ENCODE measurements at regions of chr3 and their contacts with region 1.

Region 1: GRCh38 chr3:196554205-196554604 is 14.1 kb downstream of the WDR53 start:
- DNase-seq: no peak
- CTCF ChIP-seq: no peak

Region 2: DNA sequence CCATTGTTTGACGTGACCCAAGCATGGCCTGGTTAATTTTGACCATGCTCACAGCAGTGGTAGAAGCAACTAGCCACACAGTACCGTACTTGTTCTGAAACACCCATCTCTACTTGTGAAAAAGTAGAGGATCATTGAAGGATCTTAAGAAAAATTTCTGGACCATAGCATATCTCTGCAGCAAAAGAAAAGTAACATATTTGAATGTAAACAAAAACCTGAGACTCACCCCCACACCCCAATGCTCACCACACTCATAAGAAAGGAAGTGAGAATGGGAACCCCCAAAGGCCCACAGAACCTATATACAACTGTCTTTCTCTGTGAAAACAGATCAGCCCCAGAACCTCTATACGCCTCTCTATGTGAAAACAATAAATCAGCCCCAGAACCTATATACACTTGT is 438.5 kb before region 1 on chr3:
- CTCF ChIA-PET with region 1: no interaction called
- POLR2A ChIA-PET with region 1: no interaction called
- DNase-seq: peak; percentile 72
- CTCF ChIP-seq: no peak

Region 3: GRCh38 chr3:196499061-196499460 is 55.1 kb before region 1 on chr3:
- CTCF ChIA-PET with region 1: no interaction called
- POLR2A ChIA-PET with region 1: no interaction called
- DNase-seq: no peak
- CTCF ChIP-seq: no peak

Region 4: GRCh38 chr3:196517919-196518318 is 36.3 kb before region 1 on chr3:
- CTCF ChIA-PET with region 1: no interaction called
- POLR2A ChIA-PET with region 1: no interaction called
- DNase-seq: no peak
- CTCF ChIP-seq: no peak

Region 5: GRCh38 chr3:196537319-196537984 is 16.8 kb before region 1 on chr3:
- CTCF ChIA-PET with region 1: interaction called, 14 read pairs
- POLR2A ChIA-PET with region 1: no interaction called
- DNase-seq: peak; percentile 39
- CTCF ChIP-seq: peak; percentile 64

Region 6: DNA sequence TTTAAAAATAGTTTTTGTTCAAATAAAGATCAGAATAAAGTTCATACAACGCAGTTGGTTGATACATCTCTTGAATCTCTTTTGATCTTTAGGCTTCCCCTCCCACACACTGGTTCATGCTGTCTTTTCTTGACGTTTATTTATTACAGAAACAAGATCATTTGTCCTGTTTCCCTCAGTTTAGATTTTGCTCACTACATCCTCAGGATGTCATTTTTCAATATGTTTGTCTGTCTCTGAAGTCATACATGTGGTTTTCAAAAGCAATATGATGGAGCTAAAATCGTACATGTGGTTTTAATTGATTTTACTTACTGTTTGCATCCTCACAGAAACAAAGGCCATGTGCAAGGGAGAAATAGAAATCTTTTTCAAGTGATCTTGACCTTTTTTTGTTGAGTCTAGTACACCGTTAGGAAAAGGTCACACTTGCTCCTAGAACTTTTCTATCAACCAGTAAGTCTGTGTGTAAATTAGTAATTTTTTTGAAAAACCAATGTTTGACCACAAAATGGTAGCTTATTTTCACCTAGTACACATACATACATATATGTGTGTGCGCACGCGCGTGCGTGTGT is 249.8 kb after region 1 on chr3:
- CTCF ChIA-PET with region 1: no interaction called
- POLR2A ChIA-PET with region 1: no interaction called
- DNase-seq: no peak
- CTCF ChIP-seq: no peak